ENCODE measurements at regions of chr14 and their contacts with region 1.

Region 1: GRCh38 chr14:49461529-49462401 is 124.4 kb downstream of the RPS29 start:
- DNase-seq: peak; percentile 18 to 82
- ATAC-seq: peak; percentile 87 to 93; a peak in 5 of 6 replicates
- H3K4me3 ChIP-seq: no peak overlapping the region
- H3K27ac ChIP-seq: no peak overlapping the region
- H3K4me1 ChIP-seq: no peaks in the 10 kb centered on the region
- CTCF ChIP-seq: peak; percentile 78
- EP300 ChIP-seq: no peak
- POLR2A ChIP-seq: no peak
- RAD21 ChIP-seq: peak; percentile 67 to 74

Region 2: DNA sequence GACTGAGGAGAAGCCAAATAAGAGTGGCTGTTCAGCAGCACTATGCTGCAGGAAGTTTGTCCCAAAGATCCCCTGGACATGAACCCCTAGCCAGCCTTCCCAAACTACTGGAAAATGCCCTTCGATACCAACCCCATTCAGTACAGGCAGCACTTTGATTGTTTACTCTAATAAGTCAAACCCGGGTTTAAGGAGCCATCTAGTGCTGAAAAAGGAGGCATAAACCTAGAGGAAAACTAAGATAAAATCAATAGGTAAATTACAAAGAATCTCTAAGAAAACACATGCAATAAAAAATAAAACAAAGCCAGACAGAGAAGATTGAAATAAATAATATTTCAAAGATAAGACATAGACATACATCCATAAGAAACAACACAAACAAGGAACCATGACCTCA is 647.2 kb before region 1 on chr14:
- CTCF ChIA-PET with region 1: no interaction called
- POLR2A ChIA-PET with region 1: no interaction called
- DNase-seq: no peak
- ATAC-seq: no peak
- H3K4me3 ChIP-seq: no peak overlapping the region
- H3K27ac ChIP-seq: no peak overlapping the region
- H3K4me1 ChIP-seq: no peaks in the 10 kb centered on the region
- CTCF ChIP-seq: no peak
- EP300 ChIP-seq: no peak
- POLR2A ChIP-seq: no peak
- RAD21 ChIP-seq: no peak

Region 3: DNA sequence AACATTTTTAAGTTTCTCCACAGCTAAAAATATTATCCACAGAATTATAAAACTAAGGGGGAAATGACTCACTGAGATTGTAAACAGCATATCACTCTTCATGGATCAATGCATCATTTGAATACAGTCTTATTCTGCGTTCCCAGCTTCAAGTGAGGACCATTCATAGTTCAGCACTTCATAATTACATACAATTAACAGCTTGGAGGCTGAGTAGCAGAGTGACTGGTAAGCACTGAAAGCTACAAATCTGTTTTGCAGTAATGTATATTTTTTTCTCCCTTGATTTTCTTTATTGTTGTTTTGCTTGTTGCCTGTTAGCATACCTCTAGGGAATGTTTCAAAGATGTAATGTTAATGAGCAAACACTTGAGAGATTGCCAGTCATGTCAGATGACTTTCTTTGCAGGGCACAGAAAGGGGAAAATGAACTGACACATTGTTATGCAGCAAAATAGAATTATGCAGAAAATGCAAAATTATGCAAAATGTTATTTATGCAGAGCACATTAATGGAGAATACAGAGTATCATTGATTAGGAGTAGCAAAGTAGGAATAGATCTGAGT is 14.1 kb before region 1 on chr14:
- CTCF ChIA-PET with region 1: interaction called, 15 read pairs
- POLR2A ChIA-PET with region 1: no interaction called
- DNase-seq: no peak
- ATAC-seq: no peak
- H3K4me3 ChIP-seq: no peak overlapping the region
- H3K27ac ChIP-seq: no peak overlapping the region
- H3K4me1 ChIP-seq: no peaks in the 10 kb centered on the region
- CTCF ChIP-seq: no peak
- EP300 ChIP-seq: no peak
- POLR2A ChIP-seq: no peak
- RAD21 ChIP-seq: no peak

Region 4: DNA sequence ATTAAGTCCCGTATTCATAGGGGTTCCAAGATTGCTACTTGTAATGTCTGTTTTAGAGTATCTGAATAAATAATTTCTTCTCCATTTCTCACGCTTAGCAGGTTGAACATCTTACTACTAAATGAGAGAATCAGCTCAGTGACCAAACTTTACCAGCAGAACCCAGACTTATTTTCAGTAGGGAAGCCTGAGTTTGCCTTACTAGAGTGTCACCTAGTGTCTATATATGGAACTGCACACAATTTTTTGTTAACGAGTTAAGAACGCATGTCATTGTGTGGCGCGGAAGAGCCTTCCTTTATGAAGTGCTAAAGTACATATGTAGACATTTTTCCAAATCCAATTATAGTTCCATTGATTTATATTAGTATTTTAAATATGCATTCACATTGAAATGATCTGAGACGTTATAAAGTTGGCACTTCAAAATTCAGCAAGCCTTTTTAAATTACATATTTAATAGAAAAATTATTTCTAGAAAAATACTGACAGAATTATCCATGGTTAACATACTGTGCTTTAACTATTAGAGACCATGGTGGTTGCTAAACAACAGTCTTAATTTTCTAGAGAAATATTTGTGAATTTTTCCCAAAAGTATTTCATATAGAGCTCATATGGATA is 36.1 kb after region 1 on chr14:
- CTCF ChIA-PET with region 1: interaction called, 49 read pairs
- POLR2A ChIA-PET with region 1: no interaction called
- DNase-seq: peak; percentile 44 to 77
- ATAC-seq: peak; percentile 58 to 85; a peak in 3 of 6 replicates
- H3K4me3 ChIP-seq: no peak overlapping the region
- H3K27ac ChIP-seq: no peak overlapping the region
- H3K4me1 ChIP-seq: no peaks in the 10 kb centered on the region
- CTCF ChIP-seq: peak; percentile 72
- EP300 ChIP-seq: no peak
- POLR2A ChIP-seq: no peak
- RAD21 ChIP-seq: peak; percentile 66 to 77

Region 5: DNA sequence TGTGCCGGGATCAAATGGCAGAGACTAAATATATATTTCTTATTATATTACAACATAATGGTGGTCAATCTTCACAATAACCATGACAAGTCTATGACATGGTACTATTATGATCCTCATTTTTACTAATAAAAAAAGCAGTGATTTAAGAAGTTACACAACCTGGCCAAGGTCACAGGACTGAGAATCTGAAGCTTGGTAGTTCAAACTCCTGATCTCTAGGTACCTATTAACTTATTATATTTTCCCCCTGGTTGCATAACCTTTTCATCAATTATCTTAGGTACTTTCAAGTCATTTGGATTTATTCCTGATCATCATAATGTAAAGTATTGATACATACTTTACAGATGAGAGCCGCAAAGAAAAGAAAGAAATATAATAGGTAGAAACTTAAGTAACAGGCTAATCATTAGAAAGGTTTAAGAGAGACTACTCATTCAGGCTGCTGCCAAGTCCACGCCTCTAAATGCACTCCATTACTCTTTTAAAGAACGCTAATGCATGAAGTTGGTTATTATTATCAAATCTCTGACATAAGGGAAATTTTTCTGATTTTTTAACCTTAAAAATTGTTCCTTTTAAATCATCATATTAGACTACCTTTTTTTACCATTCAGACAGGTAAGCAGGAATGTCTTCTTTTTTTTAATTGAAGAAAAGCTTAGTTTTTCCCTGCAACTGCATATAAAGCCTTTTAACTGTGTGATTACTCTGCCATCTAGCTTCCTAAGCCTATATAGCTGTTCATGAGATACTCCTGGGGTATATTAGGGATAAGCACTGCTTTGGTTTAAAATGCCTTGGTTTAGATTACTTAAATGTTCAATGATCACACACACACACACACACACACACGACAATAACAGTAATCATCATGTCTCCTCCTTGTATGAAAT is 88.8 kb after region 1 on chr14:
- CTCF ChIA-PET with region 1: interaction called, 17 read pairs
- POLR2A ChIA-PET with region 1: interaction called, 4 read pairs
- DNase-seq: peak in 1 of 2 experiments; percentile 28
- ATAC-seq: peak; percentile 53 to 79; a peak in 4 of 6 replicates
- H3K4me3 ChIP-seq: no peak overlapping the region
- H3K27ac ChIP-seq: no peak overlapping the region
- H3K4me1 ChIP-seq: peaks cover 9% of the 10 kb centered on the region; the same call in 2 of the 3 replicates
- CTCF ChIP-seq: peak; percentile 52
- EP300 ChIP-seq: no peak
- POLR2A ChIP-seq: no peak
- RAD21 ChIP-seq: peak; percentile 53 to 55

Measured in A549 (cell line).